SK-N-SH (cell line): ENCODE measurements at regions of chr18 and their contacts with region 1.

Region 1: GRCh38 chr18:24362758-24363157 is 34.9 kb downstream of the OSBPL1A start:
- DNase-seq: no peak
- H3K4me3 ChIP-seq: no peak overlapping the region
- H3K27ac ChIP-seq: no peak overlapping the region
- H3K4me1 ChIP-seq: no peaks in the 10 kb centered on the region
- H3K27me3 ChIP-seq: no peaks in the 10 kb centered on the region
- CTCF ChIP-seq: no peak
- EP300 ChIP-seq: no peak
- RAD21 ChIP-seq: no peak

Region 2: DNA sequence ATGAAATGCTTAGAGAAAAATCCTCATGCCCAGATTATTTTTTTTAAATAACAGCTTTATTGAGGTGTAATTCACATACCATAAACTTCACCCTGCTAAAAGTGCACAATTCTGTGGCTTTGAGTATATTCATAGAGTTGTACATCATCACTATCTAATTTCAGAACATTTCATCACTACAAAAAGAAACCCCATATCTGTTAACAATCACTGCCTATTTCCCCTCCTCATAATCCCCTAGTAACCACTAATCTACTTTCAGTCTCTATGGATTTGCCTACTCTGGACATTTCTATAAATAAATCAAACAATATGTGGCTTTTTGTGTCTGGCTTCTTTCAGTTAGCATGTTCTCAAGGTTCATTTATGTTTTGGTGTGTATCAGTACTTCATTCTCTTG is 16.5 kb before region 1 on chr18:
- CTCF ChIA-PET with region 1: interaction called, 12 read pairs
- POLR2A ChIA-PET with region 1: no interaction called
- DNase-seq: no peak
- H3K4me3 ChIP-seq: no peak overlapping the region
- H3K27ac ChIP-seq: no peak overlapping the region
- H3K4me1 ChIP-seq: no peaks in the 10 kb centered on the region
- H3K27me3 ChIP-seq: no peaks in the 10 kb centered on the region
- CTCF ChIP-seq: no peak
- EP300 ChIP-seq: no peak
- RAD21 ChIP-seq: no peak

Region 3: GRCh38 chr18:24378598-24378997 is 15.8 kb after region 1 on chr18:
- CTCF ChIA-PET with region 1: interaction called, 11 read pairs
- POLR2A ChIA-PET with region 1: no interaction called
- DNase-seq: no peak
- H3K4me3 ChIP-seq: no peak overlapping the region
- H3K27ac ChIP-seq: no peak overlapping the region
- H3K4me1 ChIP-seq: no peaks in the 10 kb centered on the region
- H3K27me3 ChIP-seq: no peaks in the 10 kb centered on the region
- CTCF ChIP-seq: no peak
- EP300 ChIP-seq: no peak
- RAD21 ChIP-seq: no peak

Region 4: DNA sequence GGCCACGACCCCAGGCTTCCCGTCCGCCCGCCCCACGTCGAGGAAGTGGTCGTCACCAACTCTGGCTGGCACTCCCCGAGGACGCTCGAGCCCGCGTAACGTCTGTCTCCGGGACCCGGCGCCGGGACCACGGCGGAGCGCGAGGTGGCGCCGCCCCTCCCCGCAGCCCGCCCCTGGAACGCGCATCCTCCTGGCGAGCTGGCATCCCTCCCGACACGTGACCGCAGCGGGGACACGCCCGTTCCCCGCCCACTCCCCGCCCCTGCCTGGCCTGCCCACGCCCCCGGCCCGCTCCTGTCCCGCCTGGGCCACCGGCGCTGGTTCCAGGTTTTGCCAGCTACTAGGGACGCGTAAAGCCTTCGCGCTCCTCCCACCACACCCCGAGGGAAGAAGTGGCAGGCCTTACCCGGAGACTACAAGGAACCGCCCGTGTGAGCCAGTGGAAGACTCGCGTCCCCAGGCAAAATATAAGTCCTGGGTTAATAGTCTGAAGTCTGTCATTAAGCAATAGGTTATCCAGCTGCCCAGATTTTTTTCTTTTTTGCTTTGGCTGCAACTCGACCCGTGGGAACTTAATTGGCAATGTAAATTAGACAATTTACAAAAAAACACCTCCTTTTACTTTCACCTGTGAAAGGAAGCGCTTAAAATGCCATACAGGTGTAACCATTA is 35.1 kb after region 1 on chr18 and contains the start of gene OSBPL1A:
- CTCF ChIA-PET with region 1: interaction called, 10 read pairs
- POLR2A ChIA-PET with region 1: no interaction called
- DNase-seq: peak; percentile 99
- H3K4me3 ChIP-seq: peak within 1 kb of the TSS; percentile 87 to 93
- H3K27ac ChIP-seq: peak within 1 kb of the TSS; percentile 54 to 92
- H3K4me1 ChIP-seq: peaks cover 3 to 7% of the 10 kb centered on the region in 2 experiments; a peak in 3 of 4 replicates
- H3K27me3 ChIP-seq: no peaks in the 10 kb centered on the region
- CTCF ChIP-seq: no peak
- EP300 ChIP-seq: 0 out of 4 replicates have a peak, but pooled peaks of 1 of the 2 experiments have one; percentile 14
- RAD21 ChIP-seq: no peak
- polyA plus RNA-seq, gene OSBPL1A: 21.3 and 26.1 TPM in 2 replicates